ENCODE measurements at regions of chr5 and their contacts with region 1.

Region 1: GRCh38 chr5:178895651-178896571 is at the start of gene ZFP2:
- DNase-seq: no peak
- total RNA-seq, gene ZFP2: 1.2 TPM

Region 2: GRCh38 chr5:178751286-178751685 is 144.6 kb before region 1 on chr5:
- intact Hi-C with region 1: no loop called
- DNase-seq: no peak

Region 3: DNA sequence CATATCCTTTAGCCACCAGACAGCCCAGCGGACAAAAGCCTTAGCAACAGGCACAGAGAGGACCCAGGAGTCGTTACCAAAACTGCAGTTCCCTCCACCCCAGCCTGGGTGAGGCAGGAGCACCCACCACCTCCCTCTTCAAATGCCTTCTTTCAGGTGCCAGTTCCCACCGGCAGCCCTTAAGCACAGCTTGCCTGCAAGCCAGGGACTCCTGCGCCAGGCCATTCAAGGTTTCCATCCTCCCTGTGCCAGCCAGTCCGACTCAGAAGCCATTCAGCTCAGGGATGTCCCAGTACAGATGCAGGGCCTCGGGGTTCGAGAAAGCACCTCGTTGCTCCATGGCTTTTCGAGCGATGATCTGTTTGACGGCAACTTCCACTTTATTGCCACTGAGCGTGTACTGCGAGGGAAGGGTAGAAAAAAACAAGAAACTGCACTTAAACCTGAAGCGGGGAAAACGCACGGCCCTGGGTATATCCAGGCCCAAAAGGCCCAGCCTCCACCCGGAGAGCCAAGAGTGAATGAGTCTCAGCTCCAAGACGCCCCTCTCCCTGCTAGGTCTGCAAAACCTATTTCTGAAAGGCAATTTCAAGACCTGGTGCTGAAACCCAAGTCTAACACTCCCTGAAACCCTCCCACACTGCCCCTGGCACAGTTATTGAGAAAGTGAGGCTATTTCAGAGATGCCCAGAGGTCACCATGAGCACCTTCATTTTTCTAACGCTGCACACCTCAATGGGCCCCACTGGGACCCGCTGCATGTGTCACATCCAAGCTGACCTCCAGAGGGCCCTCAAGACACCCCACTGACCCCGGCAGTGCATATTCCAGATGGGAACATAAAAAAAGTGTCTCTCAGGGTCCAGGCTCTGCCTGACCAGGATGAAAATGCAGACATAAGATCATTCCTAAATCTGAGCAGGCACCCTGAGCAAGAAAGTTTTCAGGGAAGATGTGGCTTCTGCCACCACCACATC is 128.7 kb before region 1 on chr5:
- intact Hi-C with region 1: no loop called
- DNase-seq: no peak

Region 4: GRCh38 chr5:178940569-178941360 is 44.9 kb after region 1 on chr5 and contains the start of gene ZNF454:
- intact Hi-C with region 1: loop called (anchors 2 kb)
- DNase-seq: peak; percentile 96
- total RNA-seq, gene ZNF454: 1.7 TPM

Measured in cardiac septum (tissue), 1 donor.